Activated naive CD4-positive, alpha-beta T cell treated with anti-CD3 and anti-CD28 coated beads for 36 hours (primary cell): ENCODE measurements at regions of chr14 and their contacts with region 1.

Region 1: GRCh38 chr14:76918751-76919543 is 92.7 kb downstream of the LRRC74A start:
- DNase-seq: peak; percentile 42
- H3K4me3 Mint-ChIP-seq: no peak overlapping the region
- H3K27ac Mint-ChIP-seq: peak overlapping the region; percentile 16
- H3K4me1 Mint-ChIP-seq: peaks cover 43% of the 10 kb centered on the region
- H3K27me3 Mint-ChIP-seq: no peaks in the 10 kb centered on the region

Region 2: DNA sequence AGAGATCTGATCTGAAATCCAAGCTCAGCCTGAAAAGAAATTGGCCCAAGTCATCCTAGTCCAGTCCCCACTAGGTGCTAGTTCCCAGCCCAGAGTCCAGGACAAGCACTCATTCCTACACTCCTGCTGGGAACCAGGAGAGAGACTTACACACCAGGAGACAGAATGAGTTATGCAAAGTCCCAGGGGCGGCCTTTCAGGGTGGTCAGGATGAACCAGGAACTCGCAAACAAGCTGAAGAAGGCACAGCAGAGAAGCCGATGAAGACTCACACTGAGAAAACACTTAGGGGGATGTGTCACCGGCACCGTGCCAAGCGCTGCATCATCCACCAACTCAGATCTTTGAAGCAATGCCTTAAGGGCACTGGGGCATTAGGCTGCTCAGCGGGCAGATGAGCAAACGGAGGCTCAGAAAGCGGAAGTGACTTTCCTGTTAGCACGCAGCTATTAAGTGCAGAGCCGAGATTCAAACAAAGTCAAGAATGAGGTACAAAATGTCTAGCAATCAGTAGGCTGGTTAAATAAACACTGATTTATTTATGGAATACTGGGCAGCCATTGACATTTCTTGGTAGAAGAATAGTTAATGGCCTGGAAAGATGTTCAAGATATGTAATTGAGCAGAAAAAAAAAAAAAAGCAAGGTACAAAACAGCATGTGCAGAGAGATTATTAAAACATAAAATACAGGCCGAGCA is 14.1 kb before region 1 on chr14:
- CTCF ChIA-PET with region 1: interaction called, 13 read pairs
- intact Hi-C with region 1: no loop called
- DNase-seq: peak; percentile 95
- H3K4me3 Mint-ChIP-seq: no peak overlapping the region
- H3K27ac Mint-ChIP-seq: no peak overlapping the region
- H3K4me1 Mint-ChIP-seq: peaks cover 30% of the 10 kb centered on the region
- H3K27me3 Mint-ChIP-seq: no peaks in the 10 kb centered on the region

Region 3: GRCh38 chr14:76937181-76938091 is 18.5 kb after region 1 on chr14:
- CTCF ChIA-PET with region 1: interaction called, 20 read pairs
- intact Hi-C with region 1: no loop called
- DNase-seq: no peak
- H3K4me3 Mint-ChIP-seq: no peak overlapping the region
- H3K27ac Mint-ChIP-seq: no peak overlapping the region
- H3K4me1 Mint-ChIP-seq: peaks cover 13% of the 10 kb centered on the region
- H3K27me3 Mint-ChIP-seq: no peaks in the 10 kb centered on the region

Region 4: GRCh38 chr14:76956316-76957090 is 37.6 kb after region 1 on chr14:
- CTCF ChIA-PET with region 1: interaction called, 47 read pairs
- intact Hi-C with region 1: loop called (anchors 2 kb)
- DNase-seq: peak; percentile 98
- H3K4me3 Mint-ChIP-seq: peak overlapping the region; percentile 80
- H3K27ac Mint-ChIP-seq: peak overlapping the region; percentile 97
- H3K4me1 Mint-ChIP-seq: peaks cover 72% of the 10 kb centered on the region
- H3K27me3 Mint-ChIP-seq: no peaks in the 10 kb centered on the region

Region 5: DNA sequence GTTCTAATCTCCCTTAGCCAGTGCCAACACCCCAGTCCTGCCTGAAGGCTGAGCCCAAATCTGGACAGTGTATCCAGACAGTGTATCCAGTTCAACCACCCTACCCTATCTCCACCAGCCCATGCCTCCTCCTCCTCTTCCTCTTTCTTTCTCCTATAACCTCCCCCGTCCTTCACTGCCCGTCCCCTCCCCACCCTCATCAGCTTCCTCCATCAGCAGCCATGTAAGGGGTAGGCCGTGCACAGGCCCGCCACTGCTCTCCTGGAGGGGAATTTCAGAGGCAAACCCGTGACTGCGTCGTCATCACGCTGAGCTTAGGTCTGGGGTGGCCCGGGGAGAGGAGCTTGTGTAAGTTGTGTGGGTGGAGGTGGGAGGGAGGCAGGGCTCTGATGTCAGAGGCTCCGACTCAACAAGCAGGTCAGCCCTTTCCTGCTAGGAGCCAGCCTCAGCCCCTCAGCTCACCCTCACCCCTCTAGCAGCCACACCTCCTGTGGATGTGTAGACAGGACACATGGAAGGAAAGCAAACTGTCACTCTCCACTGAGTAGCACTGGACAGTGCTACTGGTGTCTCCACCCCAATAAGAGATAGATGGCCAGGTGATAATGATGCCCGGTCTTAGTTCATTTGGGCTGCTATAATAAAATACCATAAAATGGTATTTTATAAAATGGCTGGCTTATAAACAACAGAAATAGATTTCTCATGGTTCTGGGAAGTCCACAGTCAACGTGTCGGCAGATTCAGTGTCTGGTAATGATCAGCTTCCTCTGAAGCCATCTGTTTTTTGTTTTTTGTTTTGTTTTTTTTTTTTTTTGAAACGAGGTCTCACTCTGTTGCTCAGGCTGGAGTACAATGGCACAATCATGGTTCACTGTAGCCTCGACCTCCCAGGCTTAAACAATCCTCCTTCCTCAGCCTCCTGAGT is 59.1 kb after region 1 on chr14:
- CTCF ChIA-PET with region 1: interaction called, 10 read pairs
- intact Hi-C with region 1: no loop called
- DNase-seq: peak; percentile 97
- H3K4me3 Mint-ChIP-seq: peak overlapping the region; percentile 71
- H3K27ac Mint-ChIP-seq: peak overlapping the region; percentile 95
- H3K4me1 Mint-ChIP-seq: peaks cover 28% of the 10 kb centered on the region
- H3K27me3 Mint-ChIP-seq: no peaks in the 10 kb centered on the region

Region 6: GRCh38 chr14:77067632-77068514 is 148.9 kb after region 1 on chr14:
- CTCF ChIA-PET with region 1: interaction called, 214 read pairs
- intact Hi-C with region 1: no loop called
- DNase-seq: peak; percentile 71
- H3K4me3 Mint-ChIP-seq: no peak overlapping the region
- H3K27ac Mint-ChIP-seq: no peak overlapping the region
- H3K4me1 Mint-ChIP-seq: no peaks in the 10 kb centered on the region
- H3K27me3 Mint-ChIP-seq: peaks cover 2% of the 10 kb centered on the region